ENCODE measurements at regions of chr18 and their contacts with region 1.

Region 1: DNA sequence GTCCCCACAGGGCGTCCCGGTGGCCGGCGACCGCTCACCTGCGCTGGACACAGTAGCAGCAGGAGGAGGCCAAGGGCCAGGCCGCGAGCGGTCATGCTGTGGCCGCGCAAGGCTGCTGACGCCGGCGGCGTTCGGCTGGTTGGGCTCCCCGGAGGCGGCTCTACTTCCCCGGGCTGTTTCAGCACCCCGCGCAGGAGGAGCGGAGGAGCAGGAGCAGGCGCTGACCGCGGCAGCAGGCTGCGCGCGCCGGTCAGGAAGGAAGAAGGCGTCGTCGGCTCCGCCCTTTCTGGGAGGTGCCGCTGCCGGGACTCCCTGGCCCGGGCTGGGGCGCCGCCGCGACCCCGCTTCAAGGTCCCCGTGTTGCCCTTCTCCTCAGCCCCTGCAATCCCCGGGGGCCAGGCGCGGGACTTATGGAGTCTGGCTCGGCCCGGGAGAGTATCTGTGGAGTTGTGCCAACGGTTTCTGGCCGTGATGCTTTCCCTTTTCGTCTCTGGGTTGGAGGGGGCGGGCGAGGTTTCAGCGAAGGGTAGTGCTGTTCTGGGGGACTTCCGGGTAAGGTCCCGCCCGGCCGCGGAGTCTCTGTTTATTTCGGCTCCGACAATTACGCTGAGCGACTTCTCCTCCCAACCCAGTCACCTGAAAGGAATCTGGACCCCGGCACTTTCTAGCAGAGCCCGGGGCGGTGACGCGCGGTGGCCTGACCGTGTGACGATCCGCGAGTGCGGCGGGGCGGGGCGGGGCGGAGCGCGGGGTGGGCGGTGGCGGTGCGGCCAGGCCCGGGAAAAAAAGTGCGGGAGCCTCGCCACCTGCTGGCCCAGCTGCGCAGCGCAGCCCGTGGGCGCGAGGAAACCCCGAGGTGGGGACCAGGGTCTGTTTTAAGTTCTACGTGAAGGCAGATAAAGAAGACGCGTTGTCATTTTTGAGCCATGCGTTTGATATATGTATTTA is at the start of gene NPC1:
- DNase-seq: peak; percentile 81 to 97
- H3K4me3 ChIP-seq: peak within 1 kb of the TSS; percentile 84 to 87
- H3K27ac ChIP-seq: peak within 1 kb of the TSS; percentile 98 to 100
- H3K4me1 ChIP-seq: peaks cover 10 to 29% of the 10 kb centered on the region in 2 donors
- H3K27me3 ChIP-seq: no peaks in the 10 kb centered on the region
- CTCF ChIP-seq: peak; percentile 90 to 96 (median 92)
- total RNA-seq, gene NPC1: 21.6 TPM

Region 2: GRCh38 chr18:23437357-23438045 is 149.0 kb before region 1 on chr18:
- intact Hi-C with region 1: loop called (anchors 5 kb)
- DNase-seq: peak; percentile 33 to 88
- H3K4me3 ChIP-seq: peak overlapping the region; percentile 56 to 95
- H3K27ac ChIP-seq: peak overlapping the region in 1 of 2 donors; percentile 54
- H3K4me1 ChIP-seq: no peaks in the 10 kb centered on the region
- H3K27me3 ChIP-seq: no peaks in the 10 kb centered on the region
- CTCF ChIP-seq: no peak

Region 3: DNA sequence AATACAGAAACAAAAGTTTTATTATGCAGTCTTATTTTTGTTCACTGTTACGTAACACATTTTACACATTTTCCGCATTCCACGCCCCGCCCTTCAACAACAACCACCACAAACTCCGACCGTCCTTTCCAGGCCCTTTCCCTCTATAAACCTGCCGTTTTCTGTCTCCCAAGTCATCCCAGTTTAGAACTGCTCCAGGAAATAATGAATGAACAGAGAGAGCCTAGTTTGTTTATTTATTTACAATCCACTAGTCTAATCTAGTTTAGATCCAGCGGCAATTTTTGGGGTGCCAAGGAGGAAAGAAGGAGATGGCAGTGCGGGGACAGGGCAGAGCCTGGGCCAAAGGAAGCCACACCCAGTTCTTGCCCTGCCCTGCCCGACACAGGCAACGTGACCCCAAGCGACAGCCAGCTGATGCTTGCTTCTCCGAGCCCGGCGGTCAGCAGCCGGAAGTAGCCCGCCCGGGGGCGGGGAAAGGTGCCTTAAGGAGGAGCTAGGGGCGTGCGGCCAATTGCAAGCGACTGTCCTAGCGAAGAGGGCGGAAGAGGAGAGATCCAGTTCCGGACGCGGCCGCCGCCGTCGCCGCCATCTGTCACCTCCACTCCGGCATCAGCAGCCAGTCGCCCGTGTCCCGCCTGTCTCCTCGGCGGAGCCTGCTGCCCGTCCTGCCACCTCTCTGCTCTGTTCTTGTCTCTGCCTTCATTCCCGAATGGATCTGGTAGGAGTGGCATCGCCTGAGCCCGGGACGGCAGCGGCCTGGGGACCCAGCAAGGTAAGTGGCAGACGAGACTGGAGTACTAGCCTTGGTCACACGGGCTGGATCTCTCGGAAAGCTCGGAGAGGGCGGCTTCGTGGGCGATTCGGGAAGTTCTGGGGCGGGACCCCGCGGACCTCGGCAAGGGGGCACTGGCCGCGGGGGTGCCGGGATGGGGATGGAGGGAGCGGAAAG is 133.5 kb before region 1 on chr18 and contains the start of gene RIOK3:
- intact Hi-C with region 1: loop called (anchors 5 kb)
- DNase-seq: peak; percentile 91 to 99
- H3K4me3 ChIP-seq: peak within 1 kb of the TSS; percentile 79 to 89
- H3K27ac ChIP-seq: peak within 1 kb of the TSS; percentile 91 to 92
- H3K4me1 ChIP-seq: peaks cover 3 to 32% of the 10 kb centered on the region in 2 donors
- H3K27me3 ChIP-seq: no peaks in the 10 kb centered on the region
- CTCF ChIP-seq: no peak
- total RNA-seq, gene RIOK3: 9.3 TPM

Region 4: GRCh38 chr18:23515911-23516546 is 70.5 kb before region 1 on chr18:
- intact Hi-C with region 1: loop called (anchors 1 kb)
- DNase-seq: peak in 1 of 2 donors; percentile 77
- H3K4me3 ChIP-seq: no peak overlapping the region
- H3K27ac ChIP-seq: peak overlapping the region in 1 of 2 donors; percentile 4
- H3K4me1 ChIP-seq: no peaks in the 10 kb centered on the region
- H3K27me3 ChIP-seq: no peaks in the 10 kb centered on the region
- CTCF ChIP-seq: peak; percentile 57 to 85 (median 78)

Region 5: DNA sequence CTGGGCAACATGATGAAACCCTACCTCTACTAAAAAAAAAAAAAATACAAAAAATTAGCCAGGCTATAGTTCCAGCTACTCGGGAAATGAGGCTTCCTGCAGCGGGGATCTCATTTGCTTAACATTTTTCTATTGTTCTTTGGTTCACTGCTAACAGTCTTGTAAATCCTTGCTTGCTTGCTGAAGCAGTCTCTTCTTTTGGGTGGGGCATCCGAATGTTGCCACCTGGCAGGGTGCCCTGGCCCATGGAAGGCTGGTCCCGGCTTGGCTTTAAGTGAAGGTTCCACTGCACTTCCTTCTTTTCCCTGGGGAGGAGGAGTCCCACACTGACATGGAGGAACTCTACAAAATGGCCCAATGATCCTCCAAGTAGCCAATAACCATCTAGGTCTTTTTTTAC is 82.2 kb after region 1 on chr18:
- intact Hi-C with region 1: no loop called
- DNase-seq: no peak
- H3K4me3 ChIP-seq: no peak overlapping the region
- H3K27ac ChIP-seq: no peak overlapping the region
- H3K4me1 ChIP-seq: no peaks in the 10 kb centered on the region
- H3K27me3 ChIP-seq: no peaks in the 10 kb centered on the region
- CTCF ChIP-seq: no peak

Measured in ascending aorta (tissue), 2 donors.